Naive thymus-derived CD4-positive, alpha-beta T cell (primary cell): ENCODE measurements at regions of chr12 and their contacts with region 1.

Region 1: DNA sequence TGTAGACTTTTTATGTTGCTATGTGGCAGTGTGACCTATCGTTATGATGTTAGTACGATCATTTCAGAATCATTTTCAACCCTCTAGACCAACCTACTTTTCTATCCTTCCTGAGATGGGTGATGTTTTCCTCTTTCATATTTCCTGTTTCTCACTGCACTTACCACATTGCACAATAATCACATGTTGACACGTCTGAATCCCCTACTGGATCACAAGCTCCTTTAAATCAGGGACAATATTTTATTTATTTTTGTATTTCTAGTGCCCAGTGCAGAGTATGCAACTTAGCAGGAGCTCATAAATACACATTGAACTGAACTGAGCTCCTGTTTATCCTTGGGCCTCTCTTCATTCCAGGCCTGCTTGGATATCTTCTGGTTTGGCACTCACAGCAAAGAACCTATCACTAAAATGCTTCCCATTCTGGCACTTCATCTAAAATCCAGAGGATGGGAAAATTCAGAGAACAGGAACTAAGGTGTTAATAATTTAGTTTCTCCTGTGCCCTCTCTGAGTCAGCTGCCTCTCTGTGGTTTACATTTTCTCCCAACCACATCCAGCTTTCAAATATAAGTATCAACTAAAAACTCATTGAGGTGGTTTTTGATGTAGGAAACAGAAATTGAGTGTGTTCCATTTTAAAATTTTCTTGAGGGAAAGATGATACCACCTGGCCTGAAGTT is 69.4 kb upstream of the DYRK2 start:
- DNase-seq: peak in 7 of 9 donors; percentile 52 to 80 (median 72)
- ATAC-seq: peak; percentile 80
- H3K4me3 ChIP-seq: peak overlapping the region; percentile 47
- H3K4me3 Mint-ChIP-seq: peak overlapping the region; percentile 56 to 87 (median 76)
- H3K27ac ChIP-seq: no peak overlapping the region
- H3K27ac Mint-ChIP-seq: peak overlapping the region; percentile 3 to 90 (median 61)
- H3K4me1 ChIP-seq: peaks cover 35 to 50% of the 10 kb centered on the region in 2 donors
- H3K4me1 Mint-ChIP-seq: peaks cover 32 to 69% (median 63%) of the 10 kb centered on the region in 7 donors
- H3K27me3 ChIP-seq: no peaks in the 10 kb centered on the region
- H3K27me3 Mint-ChIP-seq: peaks cover 0 to 33% (median 0%) of the 10 kb centered on the region in 5 donors

Region 2: DNA sequence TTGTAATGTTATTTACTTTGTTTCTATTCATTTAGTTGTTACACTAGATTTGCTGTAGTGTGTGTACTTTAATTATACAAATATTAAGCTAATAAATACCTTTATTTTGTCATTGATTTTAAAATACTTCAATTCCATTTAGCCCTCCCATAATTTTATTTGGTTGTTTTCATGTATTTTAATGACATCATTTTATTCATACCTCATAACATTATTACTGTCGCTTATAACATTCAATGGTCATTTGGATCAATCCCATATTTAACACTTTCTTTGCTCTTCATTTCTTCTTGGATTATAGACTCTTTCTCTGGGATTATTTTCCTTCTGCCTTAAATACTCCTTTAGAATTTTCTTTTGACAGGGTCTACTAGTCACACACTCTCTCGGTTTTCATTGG is 396.6 kb before region 1 on chr12:
- CTCF ChIA-PET with region 1: no interaction called
- POLR2A ChIA-PET with region 1: no interaction called
- intact Hi-C with region 1: no loop called
- DNase-seq: no peak
- ATAC-seq: no peak
- H3K4me3 ChIP-seq: no peak overlapping the region
- H3K4me3 Mint-ChIP-seq: no peak overlapping the region
- H3K27ac ChIP-seq: no peak overlapping the region
- H3K27ac Mint-ChIP-seq: no peak overlapping the region
- H3K4me1 ChIP-seq: no peaks in the 10 kb centered on the region
- H3K4me1 Mint-ChIP-seq: no peaks in the 10 kb centered on the region
- H3K27me3 ChIP-seq: no peaks in the 10 kb centered on the region
- H3K27me3 Mint-ChIP-seq: peaks cover 7 to 46% (median 39%) of the 10 kb centered on the region in 5 donors

Region 3: DNA sequence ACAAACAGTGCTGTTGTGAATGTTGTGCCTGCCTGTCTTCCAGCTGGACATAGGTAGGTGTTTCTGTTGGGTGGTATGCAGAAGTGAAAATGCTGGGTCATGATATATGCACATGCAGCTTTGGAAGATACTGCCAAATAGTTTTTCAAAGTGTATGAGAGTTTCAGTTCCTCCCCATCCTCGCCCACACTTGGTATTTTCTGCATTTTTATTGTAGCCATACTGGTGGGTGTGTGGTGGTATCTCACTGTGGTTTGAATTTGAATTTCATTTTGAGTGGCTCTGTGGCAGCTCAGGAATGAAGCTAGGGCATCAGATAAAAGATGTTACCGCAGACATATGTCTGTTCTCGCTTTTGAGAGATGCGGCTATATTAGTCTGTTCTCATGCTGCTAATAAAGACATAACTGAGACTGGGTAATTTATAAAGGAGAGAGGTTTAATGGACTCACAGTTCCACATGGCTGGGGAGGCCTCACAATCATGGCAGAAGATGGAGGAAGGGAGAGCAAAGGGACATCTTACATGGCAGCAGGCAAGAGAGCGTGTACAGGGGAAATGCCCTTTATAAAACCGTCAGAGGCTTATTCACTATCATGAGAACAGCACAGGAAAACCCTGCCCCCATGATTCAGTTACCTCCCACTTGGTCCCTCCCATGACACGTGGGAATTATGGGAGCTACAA is 126.9 kb before region 1 on chr12:
- CTCF ChIA-PET with region 1: no interaction called
- POLR2A ChIA-PET with region 1: no interaction called
- intact Hi-C with region 1: loop called (anchors 2 to 5 kb)
- DNase-seq: peak in 1 of 9 donors; percentile 32
- ATAC-seq: peak; percentile 33
- H3K4me3 ChIP-seq: no peak overlapping the region
- H3K4me3 Mint-ChIP-seq: peak overlapping the region in 4 of 10 donors; percentile 3 to 59 (median 6)
- H3K27ac ChIP-seq: no peak overlapping the region
- H3K27ac Mint-ChIP-seq: peak overlapping the region in 2 of 9 donors; percentile 7 to 31
- H3K4me1 ChIP-seq: peaks cover 12 to 28% of the 10 kb centered on the region in 2 donors
- H3K4me1 Mint-ChIP-seq: peaks cover 28 to 54% (median 42%) of the 10 kb centered on the region in 7 donors
- H3K27me3 ChIP-seq: no peaks in the 10 kb centered on the region
- H3K27me3 Mint-ChIP-seq: peaks cover 0 to 29% (median 0%) of the 10 kb centered on the region in 5 donors

Region 4: GRCh38 chr12:67541625-67541991 is 37.5 kb before region 1 on chr12:
- CTCF ChIA-PET with region 1: no interaction called
- POLR2A ChIA-PET with region 1: interaction called, 3 read pairs
- intact Hi-C with region 1: loop called in 1 of 2 experiments (anchors 5 kb)
- DNase-seq: peak in 7 of 9 donors; percentile 18 to 59 (median 48)
- ATAC-seq: no peak
- H3K4me3 ChIP-seq: no peak overlapping the region
- H3K4me3 Mint-ChIP-seq: peak overlapping the region in 8 of 10 donors; percentile 2 to 79 (median 12)
- H3K27ac ChIP-seq: no peak overlapping the region
- H3K27ac Mint-ChIP-seq: peak overlapping the region in 8 of 9 donors; percentile 38 to 79 (median 66)
- H3K4me1 ChIP-seq: peaks cover 4 to 20% of the 10 kb centered on the region in 2 donors
- H3K4me1 Mint-ChIP-seq: peaks cover 10 to 56% (median 48%) of the 10 kb centered on the region in 7 donors
- H3K27me3 ChIP-seq: no peaks in the 10 kb centered on the region
- H3K27me3 Mint-ChIP-seq: peaks cover 0 to 5% (median 0%) of the 10 kb centered on the region in 5 donors

Region 5: GRCh38 chr12:67592216-67593011 is 13.3 kb after region 1 on chr12:
- CTCF ChIA-PET with region 1: interaction called, 3 read pairs
- POLR2A ChIA-PET with region 1: interaction called, 12 read pairs
- intact Hi-C with region 1: loop called (anchors 1 kb)
- DNase-seq: peak in 5 of 9 donors; percentile 20 to 40 (median 33)
- ATAC-seq: no peak
- H3K4me3 ChIP-seq: no peak overlapping the region
- H3K4me3 Mint-ChIP-seq: peak overlapping the region; percentile 6 to 84 (median 46)
- H3K27ac ChIP-seq: no peak overlapping the region
- H3K27ac Mint-ChIP-seq: peak overlapping the region; percentile 79 to 94 (median 86)
- H3K4me1 ChIP-seq: peaks cover 37 to 55% of the 10 kb centered on the region in 2 donors
- H3K4me1 Mint-ChIP-seq: peaks cover 40 to 79% (median 58%) of the 10 kb centered on the region in 7 donors
- H3K27me3 ChIP-seq: no peaks in the 10 kb centered on the region
- H3K27me3 Mint-ChIP-seq: no peaks in the 10 kb centered on the region

Region 6: GRCh38 chr12:67804168-67804567 is 225.0 kb after region 1 on chr12:
- CTCF ChIA-PET with region 1: no interaction called
- POLR2A ChIA-PET with region 1: no interaction called
- intact Hi-C with region 1: loop called in 1 of 2 experiments (anchors 5 kb)
- DNase-seq: peak in 8 of 9 donors; percentile 29 to 87 (median 62)
- ATAC-seq: peak; percentile 93
- H3K4me3 ChIP-seq: no peak overlapping the region
- H3K4me3 Mint-ChIP-seq: no peak overlapping the region
- H3K27ac ChIP-seq: no peak overlapping the region
- H3K27ac Mint-ChIP-seq: no peak overlapping the region
- H3K4me1 ChIP-seq: peaks cover 18 to 28% of the 10 kb centered on the region in 2 donors
- H3K4me1 Mint-ChIP-seq: peaks cover 4 to 24% (median 7%) of the 10 kb centered on the region in 7 donors
- H3K27me3 ChIP-seq: no peaks in the 10 kb centered on the region
- H3K27me3 Mint-ChIP-seq: peaks cover 0 to under 1% (median 0%) of the 10 kb centered on the region in 5 donors